ENCODE measurements at regions of chr3 and their contacts with region 1.

Region 1: GRCh38 chr3:127544192-127544802 is 46.2 kb downstream of the TPRA1 start:
- DNase-seq: peak; percentile 7
- H3K4me3 ChIP-seq: no peak overlapping the region
- CTCF ChIP-seq: peak; percentile 84

Region 2: DNA sequence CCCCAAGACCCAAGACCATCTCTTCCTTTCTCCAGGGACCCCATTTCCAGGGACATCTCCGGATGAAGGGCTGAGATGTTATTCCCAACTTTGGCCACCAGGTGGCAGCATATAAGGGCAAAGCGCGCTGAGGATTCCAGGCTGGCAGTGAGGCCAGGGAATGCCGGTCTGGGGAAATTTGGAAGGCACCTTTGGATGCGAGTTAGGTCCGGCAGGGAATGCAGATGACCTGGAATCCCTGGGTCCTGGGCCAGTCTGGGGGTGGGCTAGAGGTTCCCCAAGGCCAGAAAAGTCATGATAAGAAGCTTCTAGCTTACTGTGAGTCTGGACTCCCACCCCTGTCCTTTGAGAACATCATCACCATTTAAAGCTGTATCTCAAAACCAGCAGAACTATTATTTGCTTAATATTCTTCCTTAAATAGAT is 1021.9 kb before region 1 on chr3:
- CTCF ChIA-PET with region 1: interaction called, 29 read pairs
- POLR2A ChIA-PET with region 1: no interaction called
- DNase-seq: no peak
- H3K4me3 ChIP-seq: no peak overlapping the region
- CTCF ChIP-seq: peak; percentile 83

Region 3: GRCh38 chr3:127351321-127351720 is 193.0 kb before region 1 on chr3:
- CTCF ChIA-PET with region 1: no interaction called
- POLR2A ChIA-PET with region 1: no interaction called
- DNase-seq: no peak
- H3K4me3 ChIP-seq: no peak overlapping the region
- CTCF ChIP-seq: no peak

Region 4: DNA sequence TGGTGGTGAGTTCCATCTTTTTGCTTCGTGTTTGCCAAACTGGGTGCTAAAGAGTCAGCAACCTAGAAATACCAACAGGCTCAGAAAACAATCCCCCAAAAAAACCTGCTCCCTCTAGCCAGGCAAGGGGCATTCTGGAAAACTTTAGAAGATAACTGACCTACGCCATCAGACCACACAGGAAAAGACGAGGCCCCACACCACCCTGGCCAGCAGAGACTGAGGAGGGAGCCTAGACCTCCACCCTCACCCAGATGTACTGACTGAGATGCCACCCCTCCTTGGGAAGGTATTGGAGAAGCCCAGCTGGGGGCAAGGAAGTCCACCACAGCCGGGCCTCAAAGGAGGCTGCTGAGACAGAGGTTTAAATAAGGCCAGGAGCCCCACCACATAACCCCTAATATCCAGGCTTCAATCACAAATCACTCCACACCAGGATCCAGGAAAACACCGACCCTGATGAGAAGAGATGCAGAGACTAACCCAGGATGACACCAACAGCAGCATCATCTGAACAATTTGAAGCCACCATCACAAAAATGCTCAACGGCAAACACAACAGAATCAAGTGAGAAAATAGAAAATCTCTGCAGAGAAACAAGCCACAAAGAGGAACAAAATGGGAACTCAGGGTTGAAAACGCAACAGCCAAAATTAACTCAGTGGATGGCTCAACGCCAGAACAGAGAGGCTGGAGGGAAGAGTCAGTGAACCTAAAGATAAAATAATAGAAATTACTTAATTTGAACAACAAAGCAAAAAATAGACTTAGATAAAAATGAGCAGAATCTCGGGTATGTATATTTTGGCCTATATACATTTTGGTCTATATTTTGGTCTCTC is 14.7 kb before region 1 on chr3:
- CTCF ChIA-PET with region 1: interaction called, 59 read pairs
- POLR2A ChIA-PET with region 1: no interaction called
- DNase-seq: no peak
- H3K4me3 ChIP-seq: no peak overlapping the region
- CTCF ChIP-seq: no peak

Region 5: DNA sequence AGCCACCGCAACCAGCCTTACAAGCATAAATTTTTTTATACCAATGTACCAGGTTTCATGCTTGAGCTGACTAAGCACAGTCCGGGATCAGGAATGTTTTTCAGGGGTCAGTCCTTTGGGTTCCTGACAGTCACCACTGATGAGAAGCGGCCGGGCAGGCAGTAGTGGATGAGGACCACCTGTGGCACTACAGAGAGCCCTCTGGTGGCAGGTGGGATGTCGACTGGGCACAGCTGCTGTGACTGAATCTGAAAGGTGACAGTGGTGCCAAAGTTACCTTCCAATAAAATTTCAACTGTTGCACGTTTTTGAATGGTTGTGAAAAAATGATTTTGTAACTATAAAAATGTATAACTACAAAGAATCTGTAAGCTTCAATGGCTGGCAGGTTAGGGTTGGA is 12.3 kb after region 1 on chr3:
- CTCF ChIA-PET with region 1: interaction called, 51 read pairs
- POLR2A ChIA-PET with region 1: no interaction called
- DNase-seq: no peak
- H3K4me3 ChIP-seq: no peak overlapping the region
- CTCF ChIP-seq: no peak

Region 6: DNA sequence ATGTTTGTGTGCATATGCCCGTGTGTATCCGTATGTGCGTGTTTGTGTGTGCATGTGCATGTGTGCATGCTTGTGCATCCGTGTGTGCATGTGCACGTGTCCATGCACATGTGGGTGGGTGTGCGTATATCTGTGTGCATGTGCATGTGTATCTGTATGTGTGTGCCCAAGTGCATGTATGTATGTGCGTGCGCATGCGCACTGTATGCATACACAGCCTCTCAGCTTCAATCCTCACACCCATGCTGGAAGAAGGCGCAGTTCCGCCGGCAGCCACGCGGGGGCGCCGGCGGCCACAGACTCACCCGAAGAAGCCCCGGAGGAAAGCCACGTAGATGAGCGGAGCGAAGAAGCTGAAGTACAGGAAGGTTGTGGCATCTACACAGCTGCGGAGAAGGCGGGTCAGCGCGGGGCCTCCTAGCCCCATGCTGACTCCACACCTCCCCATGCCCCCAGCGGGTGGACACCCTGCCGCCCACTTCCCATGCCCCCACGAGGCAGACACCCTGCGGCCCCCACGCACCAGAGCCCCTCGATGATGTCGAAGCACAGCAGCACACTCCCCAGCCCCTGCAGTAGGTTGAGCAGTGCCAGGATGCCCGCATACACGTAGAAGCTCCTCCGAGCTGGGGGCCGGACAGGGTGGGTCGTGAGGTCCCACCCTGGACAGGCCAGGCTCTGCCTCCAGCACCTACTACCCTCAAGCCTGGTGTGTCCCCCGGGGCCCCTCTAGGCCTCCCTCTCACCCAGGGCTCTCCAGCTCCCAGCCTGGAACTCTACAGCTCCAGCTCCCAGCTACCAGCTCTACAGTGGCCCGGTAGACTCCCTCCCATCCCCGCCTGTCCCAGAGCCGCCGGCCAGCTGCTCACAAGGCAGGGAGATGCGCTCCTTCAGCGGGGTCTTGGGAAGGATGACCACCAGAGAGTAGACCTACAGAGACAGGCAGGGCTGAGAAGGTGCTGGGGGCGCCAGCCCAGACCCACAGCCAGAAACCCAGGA is 30.9 kb after region 1 on chr3:
- CTCF ChIA-PET with region 1: interaction called, 11 read pairs
- POLR2A ChIA-PET with region 1: no interaction called
- DNase-seq: no peak
- H3K4me3 ChIP-seq: no peak overlapping the region
- CTCF ChIP-seq: peak; percentile 95